GM12878 (cell line): ENCODE measurements at regions of chr7 and their contacts with region 1.

Region 1: DNA sequence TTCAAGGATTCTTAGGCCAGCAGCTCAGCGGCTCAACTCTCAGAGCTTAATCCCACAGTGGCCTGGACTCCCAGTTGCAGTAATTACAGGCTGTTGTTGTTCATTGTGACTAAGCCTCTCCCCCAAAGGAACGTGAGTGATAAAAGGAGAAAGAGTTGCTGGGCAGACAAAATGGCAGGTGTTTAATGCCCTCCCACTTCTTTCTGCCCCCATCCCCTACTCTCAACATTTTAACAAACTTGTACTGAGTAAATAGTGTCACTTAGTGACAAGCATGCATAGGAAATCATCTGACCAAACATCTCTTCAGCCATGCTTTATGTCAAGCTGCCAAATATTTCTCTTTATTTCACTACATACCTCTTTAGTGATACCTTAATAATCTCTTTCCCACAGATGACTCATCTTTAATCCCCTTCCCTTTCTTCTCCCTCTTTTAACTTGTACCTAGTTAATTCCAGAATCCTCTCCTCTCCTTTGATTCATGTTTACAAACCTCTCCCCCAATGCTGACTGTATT is 12.4 kb upstream of the MTERF1 start:
- DNase-seq: no peak
- ATAC-seq: no peak
- H3K4me3 ChIP-seq: no peak overlapping the region
- H3K27ac ChIP-seq: no peak overlapping the region
- H3K4me1 ChIP-seq: no peaks in the 10 kb centered on the region
- H3K27me3 ChIP-seq: no peaks in the 10 kb centered on the region
- CTCF ChIP-seq: no peak
- EP300 ChIP-seq: no peak
- POLR2A ChIP-seq: no peak
- RAD21 ChIP-seq: no peak

Region 2: GRCh38 chr7:91915401-91916050 is 22.6 kb after region 1 on chr7:
- CTCF ChIA-PET with region 1: no interaction called
- POLR2A ChIA-PET with region 1: no interaction called
- RAD21 ChIA-PET with region 1: no interaction called
- SMC1A ChIA-PET with region 1: no interaction called
- in situ Hi-C with region 1: no loop called
- intact Hi-C with region 1: loop called (anchors 2 kb)
- DNase-seq: no peak
- ATAC-seq: no peak
- H3K4me3 ChIP-seq: no peak overlapping the region
- H3K27ac ChIP-seq: no peak overlapping the region
- H3K4me1 ChIP-seq: no peaks in the 10 kb centered on the region
- H3K27me3 ChIP-seq: no peaks in the 10 kb centered on the region
- CTCF ChIP-seq: no peak
- EP300 ChIP-seq: no peak
- POLR2A ChIP-seq: no peak
- RAD21 ChIP-seq: no peak

Region 3: GRCh38 chr7:92255308-92255707 is 362.4 kb after region 1 on chr7:
- CTCF ChIA-PET with region 1: no interaction called
- POLR2A ChIA-PET with region 1: no interaction called
- RAD21 ChIA-PET with region 1: no interaction called
- SMC1A ChIA-PET with region 1: no interaction called
- in situ Hi-C with region 1: no loop called
- intact Hi-C with region 1: no loop called
- DNase-seq: no peak
- ATAC-seq: no peak
- H3K4me3 ChIP-seq: no peak overlapping the region
- H3K27ac ChIP-seq: no peak overlapping the region
- H3K4me1 ChIP-seq: no peaks in the 10 kb centered on the region
- H3K27me3 ChIP-seq: no peaks in the 10 kb centered on the region
- CTCF ChIP-seq: no peak
- EP300 ChIP-seq: no peak
- POLR2A ChIP-seq: no peak
- RAD21 ChIP-seq: no peak